CD8-positive, alpha-beta T cell (primary cell): ENCODE measurements at regions of chr12 and their contacts with region 1.

Region 1: GRCh38 chr12:26113853-26114719 is 10.8 kb downstream of the BHLHE41 start:
- DNase-seq: peak; percentile 43 to 84 (median 66)
- ATAC-seq: peak; percentile 83
- H3K4me3 ChIP-seq: peak overlapping the region; percentile 59 to 61
- H3K4me3 Mint-ChIP-seq: peak overlapping the region; percentile 82
- H3K27ac ChIP-seq: peak overlapping the region in 1 of 2 experiments; percentile 46
- H3K27ac Mint-ChIP-seq: peak overlapping the region; percentile 50
- H3K4me1 ChIP-seq: peaks cover 10% of the 10 kb centered on the region
- H3K4me1 Mint-ChIP-seq: peaks cover 6% of the 10 kb centered on the region
- H3K27me3 ChIP-seq: peaks cover 0 to 3% of the 10 kb centered on the region in 2 experiments
- H3K27me3 Mint-ChIP-seq: peaks cover 46% of the 10 kb centered on the region
- CTCF ChIP-seq: no peak

Region 2: DNA sequence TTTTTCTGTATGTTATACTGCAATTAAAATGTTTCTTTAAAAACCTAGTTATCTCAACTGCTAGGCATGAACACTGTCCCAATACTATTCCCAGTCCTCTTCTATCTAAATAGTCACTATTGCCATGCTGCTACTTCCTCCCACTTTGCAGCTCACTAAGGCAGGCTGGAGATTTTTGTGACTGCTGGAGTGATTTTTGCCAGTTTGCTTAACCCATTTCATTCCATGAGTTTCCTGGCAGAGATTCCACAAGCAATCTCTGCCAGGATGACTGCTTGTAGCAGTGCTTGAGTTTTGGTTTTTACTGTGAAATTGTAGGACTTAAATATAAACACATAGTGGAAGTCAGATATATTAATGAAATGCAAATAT is 70.1 kb before region 1 on chr12:
- CTCF ChIA-PET with region 1: no interaction called
- POLR2A ChIA-PET with region 1: no interaction called
- intact Hi-C with region 1: no loop called
- DNase-seq: no peak
- ATAC-seq: no peak
- H3K4me3 ChIP-seq: no peak overlapping the region
- H3K4me3 Mint-ChIP-seq: no peak overlapping the region
- H3K27ac ChIP-seq: no peak overlapping the region
- H3K27ac Mint-ChIP-seq: no peak overlapping the region
- H3K4me1 ChIP-seq: no peaks in the 10 kb centered on the region
- H3K4me1 Mint-ChIP-seq: no peaks in the 10 kb centered on the region
- H3K27me3 ChIP-seq: no peaks in the 10 kb centered on the region
- H3K27me3 Mint-ChIP-seq: no peaks in the 10 kb centered on the region
- CTCF ChIP-seq: no peak

Region 3: GRCh38 chr12:26126340-26127284 is 12.5 kb after region 1 on chr12:
- CTCF ChIA-PET with region 1: interaction called, 3 read pairs
- POLR2A ChIA-PET with region 1: no interaction called
- intact Hi-C with region 1: loop called in 1 of 2 experiments (anchors 1 kb)
- DNase-seq: peak in 2 of 9 experiments; percentile 33 to 35
- ATAC-seq: no peak
- H3K4me3 ChIP-seq: peak overlapping the region in 1 of 2 experiments; percentile 39
- H3K4me3 Mint-ChIP-seq: peak overlapping the region; percentile 78
- H3K27ac ChIP-seq: no peak overlapping the region
- H3K27ac Mint-ChIP-seq: no peak overlapping the region
- H3K4me1 ChIP-seq: peaks cover 29% of the 10 kb centered on the region
- H3K4me1 Mint-ChIP-seq: peaks cover 40% of the 10 kb centered on the region
- H3K27me3 ChIP-seq: peaks cover 24 to 52% of the 10 kb centered on the region in 2 experiments
- H3K27me3 Mint-ChIP-seq: peaks cover 66% of the 10 kb centered on the region
- CTCF ChIP-seq: no peak

Region 4: GRCh38 chr12:27243804-27244683 is 1130.0 kb after region 1 on chr12 and contains the start of gene STK38L:
- CTCF ChIA-PET with region 1: no interaction called
- POLR2A ChIA-PET with region 1: no interaction called
- intact Hi-C with region 1: loop called in 1 of 2 experiments (anchors 10 kb)
- DNase-seq: peak; percentile 90 to 99 (median 98)
- ATAC-seq: peak; percentile 95
- H3K4me3 ChIP-seq: peak within 1 kb of the TSS; percentile 84 to 89
- H3K4me3 Mint-ChIP-seq: peak within 1 kb of the TSS; percentile 96
- H3K27ac ChIP-seq: peak within 1 kb of the TSS; percentile 76
- H3K27ac Mint-ChIP-seq: peak within 1 kb of the TSS; percentile 96
- H3K4me1 ChIP-seq: peaks cover 14% of the 10 kb centered on the region
- H3K4me1 Mint-ChIP-seq: peaks cover 52% of the 10 kb centered on the region
- H3K27me3 ChIP-seq: no peaks in the 10 kb centered on the region
- H3K27me3 Mint-ChIP-seq: no peaks in the 10 kb centered on the region
- CTCF ChIP-seq: no peak
- total RNA-seq, gene STK38L: 27.0 to 28.6 TPM

Region 5: GRCh38 chr12:27703710-27704452 is 1589.8 kb after region 1 on chr12:
- CTCF ChIA-PET with region 1: no interaction called
- POLR2A ChIA-PET with region 1: no interaction called
- intact Hi-C with region 1: loop called in 1 of 2 experiments (anchors 10 kb)
- DNase-seq: peak; percentile 32 to 77 (median 64)
- ATAC-seq: peak; percentile 98
- H3K4me3 ChIP-seq: no peak overlapping the region
- H3K4me3 Mint-ChIP-seq: no peak overlapping the region
- H3K27ac ChIP-seq: no peak overlapping the region
- H3K27ac Mint-ChIP-seq: no peak overlapping the region
- H3K4me1 ChIP-seq: no peaks in the 10 kb centered on the region
- H3K4me1 Mint-ChIP-seq: no peaks in the 10 kb centered on the region
- H3K27me3 ChIP-seq: no peaks in the 10 kb centered on the region
- H3K27me3 Mint-ChIP-seq: peaks cover 6% of the 10 kb centered on the region
- CTCF ChIP-seq: peak; percentile 74